Astrocyte of the cerebellum (primary cell): ENCODE measurements at regions of chr2 and their contacts with region 1.

Region 1: GRCh38 chr2:187581125-187581896 is 27.1 kb upstream of the TFPI start:
- DNase-seq: peak; percentile 62
- H3K4me3 ChIP-seq: no peak overlapping the region
- CTCF ChIP-seq: peak; percentile 63

Region 2: DNA sequence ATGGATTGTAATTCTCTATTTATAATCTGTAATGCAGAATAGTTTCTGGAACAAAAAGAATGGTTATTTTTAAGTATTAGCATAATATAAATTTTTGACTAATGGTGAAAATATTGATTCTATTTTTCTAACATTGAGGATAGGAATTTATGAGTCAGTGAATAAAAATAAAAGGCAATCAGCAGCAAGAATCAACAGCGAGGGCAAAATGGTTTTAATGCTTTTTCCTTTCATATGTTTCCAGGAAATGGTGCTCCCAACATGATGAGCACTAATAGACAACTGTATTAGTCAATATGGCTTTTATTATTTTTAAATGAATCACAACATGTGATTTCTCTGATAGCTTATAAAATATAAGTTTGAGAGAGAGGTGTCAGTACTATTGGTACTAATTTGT is 63.7 kb after region 1 on chr2:
- in situ Hi-C with region 1: no loop called
- DNase-seq: no peak
- H3K4me3 ChIP-seq: no peak overlapping the region
- CTCF ChIP-seq: no peak

Region 3: GRCh38 chr2:187847245-187848208 is 266.2 kb after region 1 on chr2:
- in situ Hi-C with region 1: loop called (anchors 5 kb)
- DNase-seq: no peak
- H3K4me3 ChIP-seq: no peak overlapping the region
- CTCF ChIP-seq: no peak

Region 4: DNA sequence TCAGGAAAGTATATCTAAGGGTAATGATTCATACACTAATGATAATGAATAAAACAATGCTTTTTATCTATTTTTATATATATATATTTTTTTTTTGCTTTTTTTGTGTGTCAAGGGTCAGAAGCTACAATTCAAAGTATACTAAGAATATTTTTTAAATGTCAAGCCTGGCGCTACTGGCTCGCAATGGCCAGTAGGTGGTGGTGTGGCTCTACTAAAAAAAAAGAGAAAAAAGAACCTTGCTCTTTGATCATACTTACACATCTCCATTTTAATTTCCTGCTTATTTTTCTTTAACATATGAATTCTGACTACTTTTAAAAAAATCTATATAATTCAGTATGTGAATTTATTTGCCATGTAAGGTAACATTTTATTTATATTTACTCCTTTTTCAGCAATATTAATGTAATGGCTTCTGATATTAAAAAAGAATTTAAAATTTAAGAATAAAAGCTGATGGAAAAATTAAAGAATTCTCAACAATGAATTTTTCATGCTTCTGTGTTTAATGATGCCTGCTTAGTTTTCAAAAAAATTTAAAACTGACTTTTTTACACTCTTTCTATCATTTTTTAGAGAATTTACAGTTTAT is 943.3 kb after region 1 on chr2:
- in situ Hi-C with region 1: loop called (anchors 25 kb)
- DNase-seq: peak; percentile 46
- H3K4me3 ChIP-seq: no peak overlapping the region
- CTCF ChIP-seq: peak; percentile 65